Activated B cell treated with CpG ODN at 0.5 μM for 24 hours (primary cell): ENCODE measurements at regions of chr4 and their contacts with region 1.

Region 1: GRCh38 chr4:141220655-141221605 is at the start of gene ZNF330:
- DNase-seq: peak; percentile 95
- ATAC-seq: peak; percentile 90
- H3K4me3 Mint-ChIP-seq: peak within 1 kb of the TSS; percentile 94
- H3K27ac Mint-ChIP-seq: peak within 1 kb of the TSS; percentile 89
- H3K4me1 Mint-ChIP-seq: peaks cover 28% of the 10 kb centered on the region
- H3K27me3 Mint-ChIP-seq: no peaks in the 10 kb centered on the region
- CTCF ChIP-seq: no peak
- total RNA-seq, gene ZNF330: 40.7 and 41.2 TPM in 2 replicates

Region 2: DNA sequence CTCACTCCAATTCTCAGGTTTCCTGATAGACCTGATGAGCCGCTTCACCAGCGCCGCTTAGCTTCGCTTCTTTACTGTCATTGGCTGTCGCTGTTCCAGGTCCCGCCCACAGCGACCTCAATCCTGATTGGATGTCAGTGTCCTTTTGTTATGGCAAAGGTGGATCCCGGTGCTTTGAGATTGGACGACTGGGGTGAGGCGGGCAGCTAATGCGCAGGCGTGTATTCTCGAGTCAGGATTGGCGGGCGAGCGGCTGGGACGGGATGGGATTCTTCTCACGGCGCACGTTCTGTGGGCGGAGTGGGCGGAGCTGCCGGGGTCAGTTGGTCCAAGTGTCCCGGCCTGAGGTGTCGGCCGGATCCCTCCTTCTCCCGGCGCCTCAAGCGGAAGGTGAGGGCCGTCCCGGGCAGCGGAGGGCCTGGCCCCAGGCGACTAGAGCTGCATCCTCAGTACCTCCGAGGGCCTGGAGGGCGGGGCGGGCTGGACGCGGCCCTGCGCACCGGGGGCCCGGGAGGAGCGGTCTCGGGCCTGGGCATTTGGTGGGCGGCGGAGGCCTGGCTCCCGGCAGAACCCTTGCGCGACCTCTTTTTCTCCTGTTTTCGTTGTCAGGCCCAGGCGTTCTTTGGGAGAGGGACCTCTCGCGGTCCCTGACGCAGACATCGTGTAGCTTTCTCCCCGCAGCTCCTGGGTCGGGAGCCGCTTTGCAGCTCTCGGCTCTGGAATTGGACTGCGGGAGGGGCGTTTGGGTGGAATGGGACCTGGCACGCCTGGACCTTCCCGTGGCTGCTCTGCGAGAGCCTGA is 847.4 kb before region 1 on chr4 and contains the start of gene SCOC:
- CTCF ChIA-PET with region 1: no interaction called
- POLR2A ChIA-PET with region 1: no interaction called
- intact Hi-C with region 1: loop called (anchors 5 kb)
- DNase-seq: peak; percentile 85
- ATAC-seq: peak; percentile 95
- H3K4me3 Mint-ChIP-seq: no peak within 1 kb of the TSS
- H3K27ac Mint-ChIP-seq: peak within 1 kb of the TSS; percentile 74
- H3K4me1 Mint-ChIP-seq: peaks cover 22% of the 10 kb centered on the region
- H3K27me3 Mint-ChIP-seq: no peaks in the 10 kb centered on the region
- CTCF ChIP-seq: no peak
- total RNA-seq, gene SCOC: 18.0 and 19.9 TPM in 2 replicates

Region 3: DNA sequence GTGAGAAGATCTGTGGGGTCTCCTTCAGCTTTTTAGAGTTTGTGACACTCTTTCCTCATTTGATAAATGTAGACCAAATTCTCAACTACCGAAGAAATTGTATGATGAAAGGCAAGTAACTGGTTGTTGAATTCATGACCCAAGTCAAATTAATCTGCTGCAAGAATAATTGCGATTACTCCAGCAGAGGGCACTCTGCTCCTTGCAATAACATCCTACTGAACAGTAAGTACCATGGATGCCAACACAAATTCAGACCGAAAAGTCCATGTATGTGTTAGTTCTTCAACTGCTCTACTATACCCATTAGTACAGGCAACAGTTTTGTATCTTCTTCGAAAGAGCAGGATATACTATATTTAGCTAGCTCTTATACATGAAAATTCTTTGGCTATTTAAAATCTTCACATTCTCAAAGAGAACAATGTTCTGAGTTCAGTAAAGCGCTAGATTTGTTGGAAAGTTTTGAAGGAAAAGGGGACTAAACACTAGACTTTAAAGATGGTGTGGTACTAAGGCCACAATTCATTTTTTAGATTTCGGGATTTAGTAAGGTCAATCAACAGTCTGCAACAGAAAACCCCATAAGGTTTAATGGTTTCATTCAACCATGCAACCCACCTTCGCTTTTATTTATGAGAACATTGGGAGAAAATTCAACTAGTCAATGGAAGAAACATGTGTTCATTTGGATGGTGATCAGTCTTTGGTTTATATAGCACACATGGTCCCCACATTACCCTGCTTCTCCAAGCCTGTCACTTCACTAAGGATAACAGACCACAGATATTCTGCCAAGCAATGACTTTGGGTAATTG is 359.4 kb before region 1 on chr4:
- CTCF ChIA-PET with region 1: no interaction called
- POLR2A ChIA-PET with region 1: no interaction called
- intact Hi-C with region 1: loop called (anchors 1 kb)
- DNase-seq: no peak
- ATAC-seq: peak; percentile 67
- H3K4me3 Mint-ChIP-seq: no peak overlapping the region
- H3K27ac Mint-ChIP-seq: no peak overlapping the region
- H3K4me1 Mint-ChIP-seq: peaks cover 14% of the 10 kb centered on the region
- H3K27me3 Mint-ChIP-seq: peaks cover 2% of the 10 kb centered on the region
- CTCF ChIP-seq: no peak

Region 4: GRCh38 chr4:141133146-141133998 is 87.6 kb before region 1 on chr4 and contains the start of gene RNF150:
- CTCF ChIA-PET with region 1: no interaction called
- POLR2A ChIA-PET with region 1: no interaction called
- intact Hi-C with region 1: loop called (anchors 2 kb)
- DNase-seq: peak; percentile 32
- ATAC-seq: peak; percentile 71
- H3K4me3 Mint-ChIP-seq: peak within 1 kb of the TSS; percentile 84
- H3K27ac Mint-ChIP-seq: no peak within 1 kb of the TSS
- H3K4me1 Mint-ChIP-seq: peaks cover 17% of the 10 kb centered on the region
- H3K27me3 Mint-ChIP-seq: peaks cover 62% of the 10 kb centered on the region
- CTCF ChIP-seq: no peak
- total RNA-seq, gene RNF150: not detected in 2 replicates

Region 5: GRCh38 chr4:141636082-141636770 is 415.3 kb after region 1 on chr4 and contains the start of gene IL15:
- CTCF ChIA-PET with region 1: no interaction called
- POLR2A ChIA-PET with region 1: no interaction called
- intact Hi-C with region 1: loop called (anchors 10 kb)
- DNase-seq: peak; percentile 35
- ATAC-seq: peak; percentile 73
- H3K4me3 Mint-ChIP-seq: peak within 1 kb of the TSS; percentile 94
- H3K27ac Mint-ChIP-seq: peak within 1 kb of the TSS; percentile 84
- H3K4me1 Mint-ChIP-seq: peaks cover 39% of the 10 kb centered on the region
- H3K27me3 Mint-ChIP-seq: no peaks in the 10 kb centered on the region
- CTCF ChIP-seq: no peak
- total RNA-seq, gene IL15: 3.4 and 3.5 TPM in 2 replicates